HEK293 (cell line): ENCODE measurements at regions of chr19 and their contacts with region 1.

Region 1: DNA sequence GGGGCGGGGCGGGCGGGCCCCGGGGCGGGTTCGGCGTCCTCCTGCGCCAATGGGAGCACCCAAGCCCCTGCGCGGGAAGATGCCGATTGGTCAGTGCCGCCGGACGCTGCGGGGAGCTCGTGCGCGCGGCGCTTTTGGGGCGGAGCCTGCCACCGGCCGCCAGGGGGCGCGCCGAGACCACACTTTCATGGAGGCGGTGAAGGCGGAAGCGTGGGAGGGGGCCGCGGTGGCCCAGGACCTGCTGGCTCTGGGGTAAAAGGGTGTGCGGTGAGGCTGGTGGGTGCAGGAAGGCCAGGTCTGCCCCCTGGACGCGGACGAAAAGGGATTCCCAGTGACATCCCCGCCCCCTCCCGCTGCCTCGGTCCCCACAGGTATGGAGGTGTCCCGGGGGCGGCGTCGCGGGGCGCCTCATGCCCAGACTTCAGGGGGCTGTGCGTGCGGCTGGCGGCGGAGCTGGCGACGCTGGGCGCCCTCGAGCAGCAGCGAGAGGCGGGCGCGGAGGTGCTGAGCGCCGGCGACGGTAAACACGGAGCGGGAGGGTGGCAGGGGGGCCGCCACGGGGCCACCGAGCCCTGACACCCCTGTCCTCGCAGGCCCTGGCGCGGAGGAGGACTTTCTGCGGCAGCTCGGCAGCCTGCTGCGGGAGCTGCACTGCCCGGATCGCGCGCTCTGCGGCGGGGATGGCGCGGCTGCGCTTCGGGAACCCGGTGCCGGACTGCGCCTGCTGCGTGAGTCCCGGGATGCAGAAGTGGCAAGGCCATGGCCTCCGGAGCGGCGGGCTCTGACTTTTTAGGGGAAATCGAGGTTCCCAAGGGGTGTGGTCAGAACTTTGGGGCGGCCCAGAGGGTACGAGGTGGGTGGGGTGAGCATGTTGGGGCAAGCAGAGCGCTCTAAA is at the start of gene FAM98C:
- H3K4me3 ChIP-seq: peak within 1 kb of the TSS; percentile 57
- H3K27ac ChIP-seq: peak within 1 kb of the TSS; percentile 91
- H3K4me1 ChIP-seq: peaks cover 10% of the 10 kb centered on the region
- CTCF ChIP-seq: peak; percentile 100

Region 2: GRCh38 chr19:38335949-38336637 is 67.1 kb before region 1 on chr19:
- CTCF ChIA-PET with region 1: interaction called, 14 read pairs
- POLR2A ChIA-PET with region 1: interaction called, 4 read pairs
- H3K4me3 ChIP-seq: peak overlapping the region; percentile 66
- H3K27ac ChIP-seq: peak overlapping the region; percentile 80
- H3K4me1 ChIP-seq: peaks cover 14% of the 10 kb centered on the region
- CTCF ChIP-seq: no peak

Region 3: DNA sequence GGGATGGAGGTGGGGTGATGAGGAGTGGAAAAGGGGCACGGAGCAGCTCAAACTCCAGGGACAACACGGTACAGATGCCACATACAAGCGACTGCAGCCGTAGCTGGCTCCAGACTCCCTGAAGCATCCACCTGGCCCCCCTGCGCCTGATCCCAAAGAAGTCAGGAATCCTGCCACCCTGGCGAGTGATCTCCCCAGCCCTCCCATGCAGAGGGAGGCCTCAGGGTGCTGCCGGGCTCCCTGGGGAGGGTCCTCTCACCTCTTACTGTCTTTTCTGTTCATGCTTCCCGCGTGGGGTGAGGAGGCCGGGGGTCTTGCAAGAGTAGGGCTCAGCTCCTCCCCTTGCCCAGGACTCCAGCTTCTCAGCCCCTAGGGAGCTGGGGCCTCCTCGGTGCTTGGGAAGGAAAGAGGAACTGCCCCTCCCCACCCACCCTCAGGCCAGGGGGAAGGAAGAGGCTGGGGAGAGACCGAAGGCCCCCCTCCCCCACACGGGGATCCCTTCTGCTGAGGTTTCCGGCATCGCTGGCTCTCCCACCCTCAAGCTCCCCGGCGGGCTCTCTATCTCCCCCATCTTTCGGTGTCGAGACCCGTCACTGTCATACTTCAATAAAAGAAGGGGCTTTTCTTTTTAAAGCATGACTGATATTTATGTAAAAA is 22.7 kb after region 1 on chr19 and contains the start of gene RASGRP4:
- CTCF ChIA-PET with region 1: interaction called, 17 read pairs
- POLR2A ChIA-PET with region 1: no interaction called
- H3K4me3 ChIP-seq: no peak within 1 kb of the TSS
- H3K27ac ChIP-seq: no peak within 1 kb of the TSS
- H3K4me1 ChIP-seq: no peaks in the 10 kb centered on the region
- CTCF ChIP-seq: no peak

Region 4: GRCh38 chr19:38502410-38503094 is 99.3 kb after region 1 on chr19:
- CTCF ChIA-PET with region 1: interaction called, 10 read pairs
- POLR2A ChIA-PET with region 1: no interaction called
- H3K4me3 ChIP-seq: no peak overlapping the region
- H3K27ac ChIP-seq: no peak overlapping the region
- H3K4me1 ChIP-seq: no peaks in the 10 kb centered on the region
- CTCF ChIP-seq: no peak

Region 5: DNA sequence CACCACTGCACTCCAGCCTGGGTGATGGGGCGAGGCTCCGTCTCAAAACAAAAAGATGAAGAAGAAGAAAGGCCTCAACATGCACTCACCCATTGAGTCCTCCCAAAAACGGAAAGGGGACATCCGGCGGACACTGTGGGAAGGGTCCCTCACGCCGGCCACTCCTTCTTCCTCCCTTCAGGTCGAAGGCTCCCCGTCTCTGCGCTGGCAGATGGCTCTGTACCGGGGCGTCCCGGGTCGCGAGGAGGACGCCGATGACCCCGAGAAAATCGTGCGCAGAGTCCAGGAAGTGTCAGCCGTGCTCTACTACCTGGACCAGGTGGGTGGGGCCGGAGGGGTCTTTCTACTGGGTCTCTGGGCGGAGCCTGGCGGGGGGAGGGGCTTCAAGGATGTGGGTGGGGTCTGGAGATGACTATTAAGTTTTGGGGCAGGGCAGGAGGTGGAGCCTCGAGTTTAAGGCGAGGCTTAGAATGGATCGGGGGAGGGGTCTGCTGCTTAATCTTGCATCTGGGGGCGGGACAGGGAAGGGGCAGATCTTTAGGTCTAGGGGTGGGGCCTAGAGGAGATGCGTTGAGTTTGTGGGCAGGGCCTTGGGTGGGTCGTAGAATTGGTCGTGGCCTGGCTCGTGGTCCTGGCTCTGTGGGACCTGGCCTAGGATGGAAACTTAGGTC is 124.4 kb after region 1 on chr19:
- CTCF ChIA-PET with region 1: no interaction called
- POLR2A ChIA-PET with region 1: no interaction called
- H3K4me3 ChIP-seq: no peak overlapping the region
- H3K27ac ChIP-seq: no peak overlapping the region
- H3K4me1 ChIP-seq: no peaks in the 10 kb centered on the region
- CTCF ChIP-seq: no peak

Region 6: GRCh38 chr19:38626401-38626800 is 223.2 kb after region 1 on chr19:
- CTCF ChIA-PET with region 1: interaction called, 11 read pairs
- POLR2A ChIA-PET with region 1: interaction called, 3 read pairs
- H3K4me3 ChIP-seq: no peak overlapping the region
- H3K27ac ChIP-seq: no peak overlapping the region
- H3K4me1 ChIP-seq: no peaks in the 10 kb centered on the region
- CTCF ChIP-seq: no peak

Region 7: DNA sequence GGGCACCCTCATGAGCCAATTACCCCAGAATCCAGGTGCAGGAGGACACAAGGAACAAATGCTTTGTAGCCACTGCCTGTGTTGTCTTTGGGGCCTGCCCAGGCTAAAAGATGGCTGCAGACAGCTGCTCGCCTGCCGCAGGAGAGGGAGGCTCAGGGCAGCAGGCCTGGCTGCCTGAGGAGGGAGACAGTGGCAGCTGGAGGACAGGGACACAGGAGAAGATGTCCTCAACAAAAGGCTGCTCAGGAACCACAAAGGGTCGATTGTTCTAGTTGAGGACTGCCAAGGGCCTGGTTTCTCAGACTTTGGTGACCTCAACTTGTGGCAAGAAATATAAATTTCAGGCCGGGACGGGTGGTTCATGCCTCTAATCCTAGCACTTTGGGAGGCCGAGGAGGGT is 488.6 kb after region 1 on chr19:
- CTCF ChIA-PET with region 1: interaction called, 36 read pairs
- POLR2A ChIA-PET with region 1: no interaction called
- H3K4me3 ChIP-seq: no peak overlapping the region
- H3K27ac ChIP-seq: no peak overlapping the region
- H3K4me1 ChIP-seq: peaks cover 3% of the 10 kb centered on the region; the same call in 1 of the 2 replicates
- CTCF ChIP-seq: no peak